ENCODE measurements at regions of chr3 and their contacts with region 1.

Region 1: DNA sequence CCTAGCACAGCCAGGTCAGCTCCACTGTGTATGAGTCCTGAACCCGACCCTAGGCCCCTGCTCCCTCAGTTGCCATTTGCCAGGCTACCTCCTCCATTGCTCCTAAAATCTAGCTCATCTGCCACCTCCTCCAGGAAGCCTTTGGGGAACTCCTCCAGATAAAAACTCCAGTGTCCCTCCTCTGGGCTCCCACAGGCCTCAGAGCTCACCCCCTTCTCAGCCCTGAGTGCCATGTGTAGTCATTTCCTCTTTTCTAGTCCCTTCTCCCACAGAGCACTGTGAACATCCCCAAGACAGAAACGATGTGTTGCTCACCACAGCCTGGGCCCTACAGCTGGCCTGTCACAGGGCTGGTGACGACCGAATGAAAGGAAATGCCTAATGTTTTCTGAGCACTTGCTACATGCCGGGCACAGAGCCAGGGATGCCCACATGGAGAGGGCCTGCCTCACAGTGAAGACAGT is 61.0 kb downstream of the IQSEC1 start:
- DNase-seq: peak; percentile 98 to 100 (median 98)
- H3K4me3 ChIP-seq: peak overlapping the region in 2 of 3 experiments; percentile 85 to 94
- H3K4me3 Mint-ChIP-seq: peak overlapping the region; percentile 86 to 95
- H3K27ac ChIP-seq: peak overlapping the region; percentile 98 to 100
- H3K27ac Mint-ChIP-seq: peak overlapping the region; percentile 99 to 100 (median 100)
- H3K4me1 ChIP-seq: peaks cover 95 to 100% of the 10 kb centered on the region in 2 donors
- H3K4me1 Mint-ChIP-seq: peaks cover 80% of the 10 kb centered on the region
- H3K27me3 ChIP-seq: no peaks in the 10 kb centered on the region
- H3K27me3 Mint-ChIP-seq: peaks cover 0 to 7% (median 0%) of the 10 kb centered on the region in 3 donors
- CTCF ChIP-seq: no peak

Region 2: GRCh38 chr3:12967606-12968351 is 44.5 kb before region 1 on chr3:
- intact Hi-C with region 1: no loop called
- DNase-seq: peak; percentile 78 to 91 (median 87)
- H3K4me3 ChIP-seq: peak overlapping the region in 2 of 3 experiments; percentile 7 to 69
- H3K4me3 Mint-ChIP-seq: peak overlapping the region; percentile 64 to 86
- H3K27ac ChIP-seq: no peak overlapping the region
- H3K27ac Mint-ChIP-seq: peak overlapping the region in 4 of 7 donors; percentile 31 to 52 (median 46)
- H3K4me1 ChIP-seq: peaks cover 33 to 52% of the 10 kb centered on the region in 2 donors
- H3K4me1 Mint-ChIP-seq: peaks cover 66% of the 10 kb centered on the region
- H3K27me3 ChIP-seq: peaks cover 0 to 6% of the 10 kb centered on the region in 2 donors
- H3K27me3 Mint-ChIP-seq: peaks cover 5 to 17% (median 16%) of the 10 kb centered on the region in 3 donors
- CTCF ChIP-seq: no peak

Region 3: DNA sequence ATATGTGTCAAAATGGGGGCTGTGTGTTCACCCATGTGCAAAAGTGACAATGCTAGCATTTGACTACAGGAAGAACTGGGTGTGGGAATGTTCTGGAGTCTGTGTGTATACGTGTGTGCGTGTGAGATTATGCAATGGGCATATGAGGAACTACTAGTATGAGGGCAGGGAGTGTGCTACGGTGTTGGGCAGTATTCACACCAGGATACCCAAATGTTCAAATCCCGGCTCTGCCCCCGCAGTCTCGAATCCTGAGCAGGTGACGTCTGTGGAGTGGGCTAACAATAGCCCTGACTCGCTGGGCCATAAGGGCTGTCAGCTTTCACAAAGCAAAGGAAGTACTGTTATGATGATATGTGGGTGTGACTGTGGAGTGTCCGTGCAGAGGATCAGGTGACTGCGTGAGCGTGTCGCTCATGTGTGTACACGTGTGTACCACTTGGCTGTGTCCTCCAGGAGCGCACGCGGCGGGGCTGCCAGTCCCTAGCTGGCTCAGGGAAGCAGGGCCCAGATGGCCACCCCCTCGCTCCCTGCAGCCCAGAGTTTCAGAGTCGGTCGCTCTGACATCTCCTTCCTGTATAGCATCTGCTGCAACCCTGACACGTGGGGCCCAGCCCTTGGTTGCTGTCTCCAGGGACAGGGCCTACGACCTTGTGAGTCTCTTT is 33.8 kb after region 1 on chr3:
- intact Hi-C with region 1: loop called in 1 of 2 experiments (anchors 5 kb)
- DNase-seq: peak; percentile 81 to 88 (median 86)
- H3K4me3 ChIP-seq: peak overlapping the region in 1 of 3 experiments; percentile 12
- H3K4me3 Mint-ChIP-seq: peak overlapping the region in 1 of 2 donors; percentile 64
- H3K27ac ChIP-seq: peak overlapping the region; percentile 64 to 71
- H3K27ac Mint-ChIP-seq: peak overlapping the region; percentile 87 to 97 (median 94)
- H3K4me1 ChIP-seq: peaks cover 26 to 27% of the 10 kb centered on the region in 2 donors
- H3K4me1 Mint-ChIP-seq: peaks cover 30% of the 10 kb centered on the region
- H3K27me3 ChIP-seq: no peaks in the 10 kb centered on the region
- H3K27me3 Mint-ChIP-seq: peaks cover 3 to 9% (median 7%) of the 10 kb centered on the region in 3 donors
- CTCF ChIP-seq: no peak